Mammary epithelial cell (primary cell): ENCODE measurements at regions of chr4 and their contacts with region 1.

Region 1: DNA sequence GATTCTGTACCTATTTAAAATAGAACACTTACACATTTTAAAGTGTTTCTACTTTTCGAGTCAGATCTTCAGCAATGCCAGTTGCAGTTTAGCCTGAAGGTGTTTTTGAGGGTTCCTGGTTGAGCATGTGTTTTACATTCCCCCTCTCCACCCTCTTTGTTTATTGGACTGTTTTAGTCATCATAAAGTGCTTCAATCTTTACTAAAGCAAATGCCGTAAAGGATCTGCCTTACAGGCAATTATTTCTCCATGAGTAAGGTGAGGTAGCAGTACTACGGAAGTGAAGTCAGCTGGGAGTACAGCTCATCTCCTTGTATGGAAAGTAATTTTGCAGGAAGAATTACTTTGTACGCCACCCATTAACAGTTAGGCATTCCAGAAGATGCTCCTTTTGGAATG is 36.9 kb downstream of the PDLIM5 start:
- DNase-seq: peak; percentile 95
- H3K4me3 ChIP-seq: peak overlapping the region; percentile 21 to 35 (median 26)
- H3K27ac ChIP-seq: peak overlapping the region; percentile 85
- H3K4me1 ChIP-seq: peaks cover 66% of the 10 kb centered on the region
- H3K27me3 ChIP-seq: no peaks in the 10 kb centered on the region
- CTCF ChIP-seq: no peak

Region 2: GRCh38 chr4:94516067-94516466 is 27.4 kb after region 1 on chr4:
- CTCF ChIA-PET with region 1: no interaction called
- dilution Hi-C with region 1: no loop called
- in situ Hi-C with region 1: no loop called
- intact Hi-C with region 1: loop called (anchors 2 kb)
- DNase-seq: peak; percentile 75
- H3K4me3 ChIP-seq: no peak overlapping the region
- H3K27ac ChIP-seq: peak overlapping the region; percentile 77
- H3K4me1 ChIP-seq: peaks cover 10% of the 10 kb centered on the region
- H3K27me3 ChIP-seq: no peaks in the 10 kb centered on the region
- CTCF ChIP-seq: no peak

Region 3: DNA sequence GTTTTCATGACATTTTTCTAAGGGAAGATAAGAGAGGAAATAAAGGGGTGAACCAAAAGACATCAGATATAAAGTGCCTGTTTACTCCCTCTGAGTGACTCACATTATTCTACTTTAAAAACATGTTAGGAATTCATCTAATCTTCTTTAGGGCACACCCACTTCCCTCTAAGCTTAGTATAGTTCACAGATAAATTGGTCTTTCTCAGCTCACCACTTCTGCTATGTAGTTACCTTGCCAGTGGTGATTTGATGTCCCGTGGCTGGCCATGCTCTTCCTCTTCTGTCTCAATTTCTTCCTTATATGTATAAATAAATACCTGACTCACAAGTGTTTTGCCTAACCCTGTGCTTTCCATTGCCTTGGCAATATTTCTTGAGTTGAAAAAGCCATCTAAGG is 59.9 kb after region 1 on chr4:
- CTCF ChIA-PET with region 1: no interaction called
- dilution Hi-C with region 1: no loop called
- in situ Hi-C with region 1: no loop called
- intact Hi-C with region 1: loop called (anchors 1 kb)
- DNase-seq: peak; percentile 90
- H3K4me3 ChIP-seq: no peak overlapping the region
- H3K27ac ChIP-seq: peak overlapping the region; percentile 80
- H3K4me1 ChIP-seq: peaks cover 46% of the 10 kb centered on the region
- H3K27me3 ChIP-seq: no peaks in the 10 kb centered on the region
- CTCF ChIP-seq: no peak

Region 4: DNA sequence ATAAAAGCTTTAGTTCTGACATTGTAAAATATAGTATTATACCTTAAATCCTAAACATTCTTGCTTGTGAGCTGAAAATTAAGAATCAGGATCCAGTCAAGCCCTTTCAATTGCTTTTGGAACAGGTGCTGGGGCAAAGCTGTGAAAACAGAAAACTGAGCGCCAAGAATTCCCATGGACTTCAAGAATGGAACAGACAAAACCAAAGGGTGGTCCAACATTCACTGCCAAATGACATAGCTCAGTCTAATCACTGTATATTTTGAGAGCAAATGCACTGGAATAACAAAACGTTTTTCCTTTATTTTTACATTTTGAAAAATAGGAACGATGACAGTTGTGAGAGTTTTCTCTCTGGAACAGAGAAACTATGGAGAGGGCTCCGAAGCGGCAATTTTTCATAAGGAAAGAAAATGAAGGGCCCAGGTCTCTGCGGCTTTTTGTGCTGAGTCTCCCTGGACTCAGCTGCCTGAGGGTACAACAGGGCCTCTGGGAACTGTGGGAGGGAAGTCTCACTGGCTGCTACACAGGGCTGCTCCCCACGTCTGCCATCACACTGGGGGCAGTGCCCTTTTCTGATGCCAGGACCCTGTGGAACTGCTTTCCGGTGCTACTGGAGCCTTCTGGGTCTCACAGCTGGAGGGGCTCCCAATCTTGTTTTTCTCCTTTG is 213.1 kb after region 1 on chr4:
- CTCF ChIA-PET with region 1: no interaction called
- dilution Hi-C with region 1: no loop called
- in situ Hi-C with region 1: no loop called
- intact Hi-C with region 1: no loop called
- DNase-seq: no peak
- H3K4me3 ChIP-seq: no peak overlapping the region
- H3K27ac ChIP-seq: no peak overlapping the region
- H3K4me1 ChIP-seq: no peaks in the 10 kb centered on the region
- H3K27me3 ChIP-seq: no peaks in the 10 kb centered on the region
- CTCF ChIP-seq: no peak